Activated CD4-positive, alpha-beta memory T cell treated with anti-CD3 and anti-CD28 coated beads for 36 hours (primary cell): ENCODE measurements at regions of chr6 and their contacts with region 1.

Region 1: DNA sequence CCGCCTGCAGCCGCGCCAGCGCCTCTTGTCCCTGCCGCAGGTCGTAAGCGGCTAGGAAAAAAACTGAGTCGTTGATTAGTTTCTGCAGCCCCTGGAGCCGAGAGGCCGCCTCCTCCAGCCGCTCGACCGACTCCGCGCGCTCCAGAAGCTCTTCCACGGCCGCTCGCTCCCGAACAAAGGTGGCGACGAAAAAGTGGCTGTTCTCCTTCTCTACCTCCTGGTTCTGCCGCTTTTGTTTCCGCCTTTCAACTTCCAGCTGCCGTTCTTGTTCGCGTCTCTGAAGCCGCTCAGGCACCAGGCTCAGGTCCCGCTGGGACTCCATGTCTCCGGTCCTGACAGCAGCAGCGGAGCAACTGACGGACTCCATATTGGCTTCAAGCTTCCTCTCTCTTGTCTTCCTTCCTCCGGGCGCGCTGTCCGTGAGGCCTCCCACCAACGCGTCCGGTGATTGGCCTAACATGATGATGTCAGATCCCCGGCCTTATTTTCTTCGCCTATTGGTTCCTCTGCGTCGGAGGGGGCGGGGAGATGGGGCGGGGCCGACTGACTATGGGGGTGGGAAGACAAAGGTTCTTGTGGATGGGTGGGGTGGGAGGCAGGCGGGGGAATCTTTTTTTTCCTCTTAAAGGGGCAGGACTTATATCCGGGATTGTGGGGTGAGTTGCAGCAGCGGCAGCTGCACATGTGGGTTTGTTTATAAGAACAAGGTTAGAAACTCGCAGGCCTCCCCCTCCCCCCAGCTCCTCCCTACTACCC is at the start of gene TBCC:
- DNase-seq: peak; percentile 97
- H3K4me3 Mint-ChIP-seq: peak within 1 kb of the TSS; percentile 99
- H3K27ac Mint-ChIP-seq: peak within 1 kb of the TSS; percentile 96
- H3K4me1 Mint-ChIP-seq: peaks cover 24% of the 10 kb centered on the region
- H3K27me3 Mint-ChIP-seq: no peaks in the 10 kb centered on the region
- total RNA-seq, gene TBCC: 17.3 TPM

Region 2: GRCh38 chr6:42338663-42339218 is 407.1 kb before region 1 on chr6:
- CTCF ChIA-PET with region 1: no interaction called
- POLR2A ChIA-PET with region 1: no interaction called
- intact Hi-C with region 1: no loop called
- DNase-seq: peak; percentile 52
- H3K4me3 Mint-ChIP-seq: peak overlapping the region; percentile 47
- H3K27ac Mint-ChIP-seq: peak overlapping the region; percentile 84
- H3K4me1 Mint-ChIP-seq: peaks cover 79% of the 10 kb centered on the region
- H3K27me3 Mint-ChIP-seq: no peaks in the 10 kb centered on the region

Region 3: DNA sequence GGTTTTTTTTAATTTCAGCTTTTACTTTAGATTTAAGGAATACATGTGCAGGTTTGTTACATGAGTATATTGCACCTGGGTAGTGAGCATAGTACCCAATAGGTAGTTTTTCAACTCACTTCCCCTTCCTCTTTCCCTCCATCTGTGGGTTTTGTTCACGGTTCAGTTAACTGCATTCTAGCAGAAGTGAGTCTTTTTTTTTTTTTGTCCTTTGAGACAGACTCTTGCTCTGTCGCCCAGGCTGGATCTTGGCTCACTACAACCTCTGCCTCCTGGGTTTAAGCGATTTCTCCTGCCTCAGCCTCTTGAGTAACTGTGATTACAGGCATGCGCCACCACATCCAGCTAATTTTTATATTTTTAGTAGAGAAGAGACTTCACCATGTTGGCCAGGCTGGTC is 173.4 kb before region 1 on chr6:
- CTCF ChIA-PET with region 1: no interaction called
- POLR2A ChIA-PET with region 1: no interaction called
- intact Hi-C with region 1: loop called (anchors 1 kb)
- DNase-seq: no peak
- H3K4me3 Mint-ChIP-seq: no peak overlapping the region
- H3K27ac Mint-ChIP-seq: no peak overlapping the region
- H3K4me1 Mint-ChIP-seq: peaks cover 50% of the 10 kb centered on the region
- H3K27me3 Mint-ChIP-seq: no peaks in the 10 kb centered on the region

Region 4: DNA sequence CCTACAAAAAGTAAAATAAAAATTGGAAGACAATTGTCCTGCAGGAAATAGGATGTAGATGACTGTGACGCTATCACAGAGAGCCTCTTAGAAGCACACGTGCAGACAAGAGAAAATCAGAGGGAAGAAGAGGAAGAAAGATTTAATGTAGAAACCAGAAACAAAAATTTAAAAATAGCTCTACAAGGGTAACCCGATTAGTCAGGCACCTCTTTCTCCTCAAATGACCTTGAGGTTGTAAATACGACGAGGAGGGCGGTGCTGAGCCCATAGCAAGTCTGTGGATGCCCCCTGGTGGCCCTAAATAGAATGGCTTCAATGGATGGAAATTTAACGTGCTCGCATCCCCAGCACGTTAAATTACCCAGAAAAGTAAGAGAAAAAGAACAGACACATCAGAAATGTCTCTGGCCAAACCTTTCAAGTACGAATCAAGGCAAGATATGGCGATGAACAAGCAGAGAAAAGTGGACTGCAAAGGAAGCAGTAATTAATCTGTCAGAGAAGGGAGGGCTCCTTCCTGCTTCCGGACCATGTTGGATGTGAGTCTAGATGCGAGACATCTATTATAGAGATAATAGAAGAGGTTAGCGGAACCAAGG is 19.3 kb before region 1 on chr6:
- CTCF ChIA-PET with region 1: interaction called, 21 read pairs
- POLR2A ChIA-PET with region 1: interaction called, 15 read pairs
- intact Hi-C with region 1: loop called (anchors 1 kb)
- DNase-seq: peak; percentile 80
- H3K4me3 Mint-ChIP-seq: peak overlapping the region; percentile 77
- H3K27ac Mint-ChIP-seq: peak overlapping the region; percentile 93
- H3K4me1 Mint-ChIP-seq: peaks cover 20% of the 10 kb centered on the region
- H3K27me3 Mint-ChIP-seq: no peaks in the 10 kb centered on the region

Region 5: DNA sequence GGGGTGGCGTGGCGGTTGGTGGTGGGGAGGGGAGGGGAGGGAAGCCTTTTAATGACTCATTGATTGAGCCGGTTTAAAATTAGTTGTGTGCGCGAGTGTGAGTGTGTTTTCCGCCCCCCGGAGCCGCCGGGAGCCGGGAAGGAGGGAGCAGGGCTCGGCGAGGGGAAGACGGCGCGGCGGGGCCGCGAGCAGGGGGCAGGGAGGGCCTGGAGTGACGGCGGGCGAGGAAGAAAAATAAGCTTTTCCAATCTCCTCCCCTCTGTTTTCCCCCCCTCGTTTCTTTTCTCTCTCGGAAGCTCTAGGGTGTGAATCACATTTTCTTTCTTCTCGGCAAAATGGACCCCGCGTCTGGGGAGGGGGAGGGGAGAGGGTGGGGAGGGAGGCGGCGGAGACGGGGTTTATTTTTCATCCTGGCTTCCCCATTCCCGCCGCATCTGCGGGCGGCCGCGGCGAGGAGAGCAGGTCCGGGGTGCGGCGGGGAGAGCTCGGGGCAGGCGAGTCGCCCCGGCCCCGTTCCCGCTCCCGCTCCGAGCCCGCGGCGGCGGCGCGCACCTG is 36.8 kb after region 1 on chr6:
- CTCF ChIA-PET with region 1: interaction called, 3 read pairs
- POLR2A ChIA-PET with region 1: interaction called, 97 read pairs
- intact Hi-C with region 1: loop called (anchors 1 kb)
- DNase-seq: peak; percentile 80
- H3K4me3 Mint-ChIP-seq: peak overlapping the region; percentile 81
- H3K27ac Mint-ChIP-seq: peak overlapping the region; percentile 95
- H3K4me1 Mint-ChIP-seq: peaks cover 26% of the 10 kb centered on the region
- H3K27me3 Mint-ChIP-seq: no peaks in the 10 kb centered on the region

Region 6: DNA sequence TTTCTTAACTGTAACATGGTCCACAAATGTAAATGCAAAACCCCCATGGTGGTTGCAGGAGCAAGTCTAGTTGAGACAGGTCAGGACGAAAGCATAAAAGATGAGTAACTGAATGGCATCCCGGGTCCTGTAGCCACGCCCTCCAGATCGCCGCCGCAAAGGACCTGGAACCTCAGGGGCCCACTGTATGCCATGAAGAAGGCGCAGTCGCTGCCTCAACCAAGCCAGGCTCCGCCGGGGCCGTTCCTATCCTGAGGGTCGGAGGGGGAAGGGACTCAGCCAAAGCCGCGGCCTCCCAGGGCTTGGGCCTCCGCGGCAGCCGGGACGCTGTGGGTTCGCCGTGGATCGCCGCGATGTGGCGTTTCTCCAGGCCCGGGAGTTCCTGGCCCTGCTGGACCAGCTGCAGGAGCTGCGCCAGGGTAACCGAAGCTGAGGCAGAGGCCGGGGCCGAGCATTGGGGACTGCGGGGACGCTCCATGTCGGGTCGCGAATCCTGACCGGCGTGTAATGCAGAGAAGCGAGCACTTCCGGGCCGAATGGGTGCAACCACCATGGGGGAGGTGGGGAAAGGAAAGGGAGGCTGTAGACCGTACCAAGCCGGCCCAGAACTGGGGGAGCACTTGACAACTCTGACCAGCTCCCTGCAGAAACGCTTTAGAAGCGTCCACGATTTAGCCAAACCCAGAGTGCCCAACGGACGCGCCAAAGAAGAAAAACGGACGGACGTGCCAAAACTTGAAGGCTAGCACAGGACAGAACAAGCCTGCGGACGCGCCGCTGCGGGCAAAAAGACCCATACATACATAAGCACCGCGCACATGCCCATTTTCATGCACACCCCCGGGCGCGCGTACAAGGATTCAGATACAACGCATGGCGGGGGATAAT is 144.7 kb after region 1 on chr6:
- CTCF ChIA-PET with region 1: no interaction called
- POLR2A ChIA-PET with region 1: interaction called, 8 read pairs
- intact Hi-C with region 1: loop called (anchors 2 kb)
- DNase-seq: peak; percentile 96
- H3K4me3 Mint-ChIP-seq: peak overlapping the region; percentile 88
- H3K27ac Mint-ChIP-seq: peak overlapping the region; percentile 94
- H3K4me1 Mint-ChIP-seq: peaks cover 25% of the 10 kb centered on the region
- H3K27me3 Mint-ChIP-seq: no peaks in the 10 kb centered on the region